Right ventricle myocardium superior (tissue), 1 donor: ENCODE measurements at regions of chr7 and their contacts with region 1.

Region 1: GRCh38 chr7:2680792-2681490 is 7.1 kb upstream of the AMZ1 start:
- DNase-seq: peak; percentile 90
- ATAC-seq: peak; percentile 95

Region 2: GRCh38 chr7:2451171-2452073 is 229.5 kb before region 1 on chr7:
- intact Hi-C with region 1: loop called (anchors 10 kb)
- DNase-seq: peak; percentile 92
- ATAC-seq: peak; percentile 98

Region 3: GRCh38 chr7:2567679-2568278 is 113.2 kb before region 1 on chr7:
- intact Hi-C with region 1: loop called (anchors 2 kb)
- DNase-seq: no peak
- ATAC-seq: peak; percentile 89